Activated CD8-positive, alpha-beta T cell treated with anti-CD3 and anti-CD28 coated beads, Interleukin-2, amount 10 ng/mL, durations not matched to agents 7 days and 5 days (primary cell): ENCODE measurements at regions of chr2 and their contacts with region 1.

Region 1: GRCh38 chr2:190408538-190409271 is 550 bp downstream of the MFSD6 start:
- DNase-seq: peak; percentile 81
- ATAC-seq: peak; percentile 50
- H3K4me3 Mint-ChIP-seq: peak overlapping the region; percentile 87
- H3K27ac Mint-ChIP-seq: peak overlapping the region; percentile 94
- H3K4me1 Mint-ChIP-seq: peaks cover 39% of the 10 kb centered on the region
- H3K27me3 Mint-ChIP-seq: no peaks in the 10 kb centered on the region

Region 2: GRCh38 chr2:190255676-190256075 is 153.0 kb before region 1 on chr2:
- CTCF ChIA-PET with region 1: no interaction called
- POLR2A ChIA-PET with region 1: no interaction called
- DNase-seq: no peak
- ATAC-seq: no peak
- H3K4me3 Mint-ChIP-seq: no peak overlapping the region
- H3K27ac Mint-ChIP-seq: no peak overlapping the region
- H3K4me1 Mint-ChIP-seq: no peaks in the 10 kb centered on the region
- H3K27me3 Mint-ChIP-seq: no peaks in the 10 kb centered on the region

Region 3: DNA sequence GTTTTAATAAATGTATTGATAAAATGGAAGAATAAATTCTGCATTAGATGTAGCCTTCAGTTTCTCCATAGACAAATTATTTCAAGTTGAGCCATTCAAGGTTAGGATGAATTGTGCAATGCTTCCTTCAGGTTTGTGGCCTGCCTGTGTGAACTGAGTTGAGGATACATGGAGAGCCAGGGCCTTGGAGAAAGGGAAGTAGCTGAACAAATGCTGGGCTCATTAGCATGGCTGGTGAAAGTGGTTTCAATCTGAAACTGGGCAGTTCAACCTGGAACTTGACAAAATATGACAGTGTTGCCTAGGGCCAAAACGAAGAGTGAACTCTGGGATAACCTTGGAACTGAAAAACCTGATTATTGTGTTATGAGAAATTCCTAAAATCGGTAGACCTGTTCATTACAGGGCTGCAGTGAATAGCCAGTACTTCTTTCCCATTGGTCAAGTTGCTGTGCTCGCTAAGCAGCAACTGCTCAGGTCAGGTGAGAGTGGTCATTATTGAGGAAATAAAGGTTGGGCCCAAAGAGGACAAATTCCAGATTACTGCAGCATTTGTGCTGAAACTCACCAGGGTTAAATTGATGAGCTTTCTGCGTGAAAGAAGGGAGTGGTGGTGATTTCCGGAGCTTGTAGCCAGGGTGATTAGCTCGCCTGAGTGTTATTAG is 52.6 kb before region 1 on chr2:
- CTCF ChIA-PET with region 1: no interaction called
- POLR2A ChIA-PET with region 1: interaction called, 10 read pairs
- DNase-seq: no peak
- ATAC-seq: no peak
- H3K4me3 Mint-ChIP-seq: no peak overlapping the region
- H3K27ac Mint-ChIP-seq: no peak overlapping the region
- H3K4me1 Mint-ChIP-seq: peaks cover 13% of the 10 kb centered on the region
- H3K27me3 Mint-ChIP-seq: no peaks in the 10 kb centered on the region